OCI-LY7 (cell line): ENCODE measurements at regions of chr6 and their contacts with region 1.

Region 1: DNA sequence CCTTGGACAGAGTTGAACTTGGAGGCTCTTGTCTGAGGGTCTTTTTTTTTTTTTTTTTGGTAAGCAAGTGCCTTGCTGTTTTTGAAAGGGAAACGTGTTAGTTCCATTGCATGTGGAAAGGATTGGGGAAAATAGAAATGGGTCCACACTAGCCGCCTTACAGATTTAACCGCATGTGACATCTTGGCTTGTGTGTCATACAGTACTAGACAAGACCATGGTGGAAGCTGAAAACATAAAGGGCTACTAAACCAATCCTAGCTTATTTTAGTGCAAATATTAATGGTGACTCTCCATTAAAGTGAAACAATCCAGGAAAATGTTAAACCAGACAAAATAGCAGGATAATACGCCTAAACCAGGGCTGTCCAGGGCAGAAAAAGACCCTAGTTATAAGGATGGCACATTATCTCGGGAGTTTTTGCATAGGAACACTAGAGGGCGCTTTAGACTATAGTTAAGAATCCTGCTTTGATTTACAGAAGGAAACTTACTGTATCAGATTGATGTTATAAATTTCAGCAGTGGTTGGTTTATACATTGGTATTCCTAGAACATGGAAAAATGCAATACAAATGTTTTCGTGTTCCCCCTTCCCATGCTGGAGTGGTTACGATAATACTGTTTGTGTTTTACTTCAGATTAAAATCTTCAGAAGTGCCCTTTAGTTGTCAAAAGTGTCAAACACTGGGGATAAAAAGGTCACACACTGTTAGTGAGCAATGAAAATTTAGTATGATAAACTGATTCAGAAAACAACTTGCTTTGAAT is 59.8 kb upstream of the DEK start:
- DNase-seq: peak; percentile 90
- H3K4me3 ChIP-seq: peak overlapping the region; percentile 38
- H3K27ac ChIP-seq: peak overlapping the region; percentile 43
- H3K4me1 ChIP-seq: peaks cover 66% of the 10 kb centered on the region
- CTCF ChIP-seq: peak; percentile 98

Region 2: GRCh38 chr6:18155150-18155863 is 168.8 kb before region 1 on chr6 and contains the start of gene KDM1B:
- CTCF ChIA-PET with region 1: no interaction called
- POLR2A ChIA-PET with region 1: interaction called, 3 read pairs
- intact Hi-C with region 1: loop called (anchors 5 kb)
- DNase-seq: peak; percentile 99
- H3K4me3 ChIP-seq: peak within 1 kb of the TSS; percentile 98
- H3K27ac ChIP-seq: peak within 1 kb of the TSS; percentile 82
- H3K4me1 ChIP-seq: peaks cover 30% of the 10 kb centered on the region
- CTCF ChIP-seq: no peak
- total RNA-seq, gene KDM1B: 30.4 and 37.6 TPM in 2 replicates

Region 3: GRCh38 chr6:18335948-18336347 is 11.8 kb after region 1 on chr6:
- CTCF ChIA-PET with region 1: interaction called, 4 read pairs
- POLR2A ChIA-PET with region 1: interaction called, 183 read pairs
- intact Hi-C with region 1: no loop called
- DNase-seq: no peak
- H3K4me3 ChIP-seq: no peak overlapping the region
- H3K27ac ChIP-seq: peak overlapping the region; percentile 1
- H3K4me1 ChIP-seq: peaks cover 52% of the 10 kb centered on the region
- CTCF ChIP-seq: no peak

Region 4: DNA sequence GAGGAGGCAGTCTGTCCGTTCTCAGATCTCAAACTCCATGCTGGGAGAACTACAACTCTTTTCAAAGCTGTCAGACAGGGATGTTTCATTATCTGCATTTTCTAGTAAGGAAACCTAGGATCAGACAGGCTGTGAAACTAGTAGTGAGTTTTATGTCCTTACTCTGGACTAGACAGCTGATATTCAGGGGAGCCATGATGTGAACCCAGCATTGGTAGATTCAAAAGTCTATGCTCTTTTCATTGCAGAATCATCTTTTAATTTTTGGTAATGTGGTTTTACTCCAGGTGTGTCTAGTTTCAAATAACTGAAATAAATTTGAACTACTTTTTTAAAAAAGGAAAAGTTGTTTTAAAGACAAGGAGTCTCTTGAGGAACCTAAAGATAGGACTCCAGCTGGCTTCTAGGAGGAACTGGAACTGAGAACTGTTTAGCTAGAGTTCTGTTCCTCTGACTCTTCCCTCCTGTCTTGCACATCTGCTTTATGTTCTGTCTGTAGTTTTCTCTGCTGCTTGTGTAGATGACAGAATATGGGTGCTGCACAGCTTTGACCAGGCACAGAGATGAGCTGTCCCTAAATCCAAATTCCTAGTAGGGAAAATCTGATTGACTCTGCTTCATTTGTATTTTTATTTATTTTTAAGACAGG is 35.2 kb after region 1 on chr6:
- CTCF ChIA-PET with region 1: interaction called, 9 read pairs
- POLR2A ChIA-PET with region 1: interaction called, 133 read pairs
- intact Hi-C with region 1: no loop called
- DNase-seq: peak; percentile 97
- H3K4me3 ChIP-seq: peak overlapping the region; percentile 53
- H3K27ac ChIP-seq: peak overlapping the region; percentile 100
- H3K4me1 ChIP-seq: peaks cover 58% of the 10 kb centered on the region
- CTCF ChIP-seq: 0 out of 2 replicates have a peak, but pooled peaks have one; percentile 12

Region 5: GRCh38 chr6:18387061-18387721 is 63.1 kb after region 1 on chr6 and contains the start of gene RNF144B:
- CTCF ChIA-PET with region 1: no interaction called
- POLR2A ChIA-PET with region 1: interaction called, 128 read pairs
- intact Hi-C with region 1: loop called (anchors 1 kb)
- DNase-seq: peak; percentile 97
- H3K4me3 ChIP-seq: peak within 1 kb of the TSS; percentile 98
- H3K27ac ChIP-seq: peak within 1 kb of the TSS; percentile 75
- H3K4me1 ChIP-seq: peaks cover 59% of the 10 kb centered on the region
- CTCF ChIP-seq: no peak
- total RNA-seq, gene RNF144B: 83.4 and 87.9 TPM in 2 replicates

Region 6: DNA sequence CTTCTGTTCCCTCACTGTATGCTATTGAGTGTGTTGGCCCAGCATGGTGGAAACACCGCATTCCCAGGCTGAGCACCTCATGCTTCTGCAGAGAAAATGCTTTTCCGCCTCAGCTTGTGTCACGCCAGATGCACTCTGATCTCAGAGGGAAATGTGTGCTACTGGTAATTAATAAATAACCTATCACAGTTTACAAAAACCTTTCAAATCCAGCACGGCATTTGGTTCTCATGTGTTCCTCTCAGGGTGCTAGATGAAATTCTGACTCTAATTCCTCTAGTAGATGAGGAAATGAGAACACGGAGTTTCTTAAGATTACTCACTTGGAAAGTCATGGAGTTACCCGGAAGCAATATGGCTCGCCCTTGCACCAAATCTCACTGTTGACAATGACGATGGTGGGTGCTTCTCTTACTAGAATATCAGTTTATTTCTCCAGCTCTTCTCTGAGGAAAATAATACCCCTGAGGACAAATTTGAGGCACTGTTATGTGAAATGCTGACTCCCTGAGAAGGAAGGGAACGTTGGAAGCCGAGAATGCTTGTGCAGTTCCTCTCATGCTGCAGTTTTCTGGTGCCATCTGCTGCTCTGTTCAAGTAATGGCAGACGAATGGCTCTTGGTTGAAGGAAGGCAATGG is 179.6 kb after region 1 on chr6:
- CTCF ChIA-PET with region 1: interaction called, 35 read pairs
- POLR2A ChIA-PET with region 1: interaction called, 17 read pairs
- intact Hi-C with region 1: loop called (anchors 1 kb)
- DNase-seq: peak; percentile 89
- H3K4me3 ChIP-seq: peak overlapping the region; percentile 45
- H3K27ac ChIP-seq: no peak overlapping the region
- H3K4me1 ChIP-seq: peaks cover 15% of the 10 kb centered on the region
- CTCF ChIP-seq: peak; percentile 100

Region 7: DNA sequence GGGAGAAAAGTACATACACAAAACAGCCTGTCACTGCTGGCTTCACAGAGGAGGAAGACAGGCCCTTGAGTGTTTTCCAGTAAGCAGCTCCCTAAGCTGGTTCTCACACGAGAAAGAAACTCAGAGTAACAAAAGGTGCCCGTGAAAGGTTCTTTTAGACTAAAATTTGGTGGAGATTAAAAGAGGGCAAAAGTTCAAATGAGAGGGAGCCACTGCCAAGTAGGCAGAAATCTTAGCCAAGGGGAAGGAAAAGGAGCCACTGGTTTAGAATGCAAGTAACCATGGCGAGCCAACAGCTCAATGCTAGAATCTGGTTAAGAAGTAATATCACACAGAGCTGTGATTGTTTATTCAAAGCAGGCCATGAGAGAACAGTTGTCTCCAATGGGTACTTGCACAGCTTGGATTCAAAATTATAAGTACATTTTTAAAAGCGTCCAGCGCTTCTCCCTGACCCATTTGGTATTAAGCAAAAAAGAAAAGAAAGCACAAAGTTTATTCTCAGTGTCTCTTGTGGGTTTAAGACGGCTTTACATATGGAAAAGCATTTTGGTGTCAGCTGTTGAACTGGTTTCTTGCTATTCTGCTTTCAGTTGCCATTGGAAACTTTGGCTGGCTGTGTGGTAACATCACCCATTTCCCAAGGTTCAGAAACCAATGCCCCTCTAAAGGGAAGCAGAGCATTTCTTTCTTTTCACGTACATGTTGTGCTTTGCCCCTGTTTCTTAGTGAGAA is 711.5 kb after region 1 on chr6:
- CTCF ChIA-PET with region 1: no interaction called
- POLR2A ChIA-PET with region 1: no interaction called
- intact Hi-C with region 1: no loop called
- DNase-seq: no peak
- H3K4me3 ChIP-seq: no peak overlapping the region
- H3K27ac ChIP-seq: no peak overlapping the region
- H3K4me1 ChIP-seq: no peaks in the 10 kb centered on the region
- CTCF ChIP-seq: no peak